ENCODE measurements at regions of chr12 and their contacts with region 1.

Region 1: GRCh38 chr12:39619660-39620433 is at the start of gene ABCD2:
- DNase-seq: peak; percentile 66 to 69
- ATAC-seq: peak; percentile 92 to 95 (median 93)
- H3K4me3 ChIP-seq: peak within 1 kb of the TSS; percentile 11 to 67 (median 54)
- H3K27ac ChIP-seq: peak within 1 kb of the TSS; percentile 45 to 87 (median 78)
- H3K4me1 ChIP-seq: peaks cover 0 to 15% (median 3%) of the 10 kb centered on the region in 9 donors
- H3K27me3 ChIP-seq: no peaks in the 10 kb centered on the region
- CTCF ChIP-seq: no peak
- total RNA-seq, gene ABCD2: 5.4 to 10.1 (median 7.7) TPM

Region 2: GRCh38 chr12:39199351-39199750 is 420.5 kb before region 1 on chr12:
- intact Hi-C with region 1: no loop called
- DNase-seq: no peak
- ATAC-seq: no peak
- H3K4me3 ChIP-seq: no peak overlapping the region
- H3K27ac ChIP-seq: no peak overlapping the region
- H3K4me1 ChIP-seq: no peaks in the 10 kb centered on the region
- H3K27me3 ChIP-seq: no peaks in the 10 kb centered on the region
- CTCF ChIP-seq: no peak

Region 3: GRCh38 chr12:39341179-39341578 is 278.7 kb before region 1 on chr12:
- intact Hi-C with region 1: loop called in 1 of 10 experiments (anchors 10 kb)
- DNase-seq: no peak
- ATAC-seq: no peak
- H3K4me3 ChIP-seq: no peak overlapping the region
- H3K27ac ChIP-seq: no peak overlapping the region
- H3K4me1 ChIP-seq: peaks cover 0 to 3% (median 0%) of the 10 kb centered on the region in 9 donors
- H3K27me3 ChIP-seq: no peaks in the 10 kb centered on the region
- CTCF ChIP-seq: no peak

Measured in heart right ventricle (tissue), 16 donors.